ENCODE measurements at regions of chr12 and their contacts with region 1.

Region 1: DNA sequence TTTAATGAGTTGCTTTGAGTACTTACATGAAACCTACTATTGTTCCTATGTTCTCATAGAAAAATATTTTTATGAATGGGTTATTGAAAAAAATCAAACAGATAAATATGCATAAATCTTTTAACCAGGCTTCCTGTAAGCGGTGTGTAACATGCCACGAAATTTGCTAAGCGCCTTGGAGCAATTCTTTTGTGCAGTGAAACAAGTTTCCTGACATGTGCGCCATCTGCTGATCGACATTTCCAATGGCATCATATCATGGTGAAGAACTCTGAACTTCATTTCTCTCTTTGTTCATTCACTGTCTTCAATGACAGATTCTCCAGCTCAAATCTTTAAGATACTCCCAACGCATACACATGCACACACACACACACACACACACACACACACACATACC is 145.6 kb upstream of the NAV3 start:
- DNase-seq: peak; percentile 58
- ATAC-seq: peak; percentile 81
- H3K4me3 Mint-ChIP-seq: no peak overlapping the region
- H3K27ac Mint-ChIP-seq: no peak overlapping the region
- H3K4me1 Mint-ChIP-seq: peaks cover 10% of the 10 kb centered on the region
- H3K27me3 Mint-ChIP-seq: no peaks in the 10 kb centered on the region
- CTCF ChIP-seq: peak; percentile 33; the same call in 1 of the 2 replicates

Region 2: DNA sequence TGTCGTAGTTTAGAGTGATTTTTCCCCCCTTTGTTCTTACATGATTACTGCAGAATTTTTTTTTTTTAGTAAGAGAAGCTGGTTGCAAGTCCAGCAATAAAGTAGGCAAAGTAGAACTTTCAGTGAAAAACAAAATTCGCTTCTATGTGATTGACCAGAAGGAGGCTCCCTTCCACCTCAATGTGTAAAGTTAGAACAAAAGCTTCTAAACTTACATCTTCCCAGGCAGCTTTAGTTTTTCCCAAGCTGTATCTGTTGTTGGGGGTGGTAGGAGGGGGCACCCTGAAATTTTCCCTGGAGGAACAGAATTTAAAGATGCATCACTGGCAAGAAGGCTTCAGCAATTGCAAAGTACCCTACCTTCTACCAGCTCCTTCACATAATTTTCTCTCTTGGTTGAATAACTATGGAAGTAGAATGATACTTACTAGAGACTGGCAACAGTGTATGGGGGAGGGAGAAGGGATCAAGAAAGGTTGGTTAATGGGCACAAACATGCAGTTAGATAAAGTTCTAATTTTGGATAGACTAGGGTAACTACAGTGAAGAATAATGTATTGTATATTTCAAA is 532.4 kb before region 1 on chr12:
- CTCF ChIA-PET with region 1: interaction called, 12 read pairs
- POLR2A ChIA-PET with region 1: no interaction called
- DNase-seq: no peak
- ATAC-seq: peak; percentile 72
- H3K4me3 Mint-ChIP-seq: no peak overlapping the region
- H3K27ac Mint-ChIP-seq: no peak overlapping the region
- H3K4me1 Mint-ChIP-seq: peaks cover 6% of the 10 kb centered on the region
- H3K27me3 Mint-ChIP-seq: no peaks in the 10 kb centered on the region
- CTCF ChIP-seq: peak; percentile 28; the same call in 1 of the 2 replicates

Region 3: DNA sequence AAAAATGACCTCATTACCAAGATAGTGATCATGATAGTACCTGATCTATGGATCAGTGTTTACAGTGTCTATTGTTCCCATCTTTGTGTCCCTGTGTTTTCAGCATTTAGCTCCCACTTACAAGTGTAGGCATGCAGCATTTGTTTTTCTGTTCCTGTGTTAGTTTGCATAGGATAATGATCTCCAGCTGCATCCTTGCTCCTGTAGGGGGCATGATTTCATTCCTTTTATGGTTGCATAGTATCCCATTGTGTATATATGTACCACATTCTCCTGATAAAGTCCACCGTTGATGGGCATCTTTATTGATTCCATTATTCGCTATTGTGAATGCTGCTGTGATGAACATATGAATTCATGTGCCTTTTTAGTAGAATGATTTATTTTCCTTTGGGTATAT is 69.8 kb before region 1 on chr12:
- CTCF ChIA-PET with region 1: interaction called, 21 read pairs
- POLR2A ChIA-PET with region 1: no interaction called
- DNase-seq: peak; percentile 18
- ATAC-seq: peak; percentile 89
- H3K4me3 Mint-ChIP-seq: no peak overlapping the region
- H3K27ac Mint-ChIP-seq: no peak overlapping the region
- H3K4me1 Mint-ChIP-seq: peaks cover 19% of the 10 kb centered on the region
- H3K27me3 Mint-ChIP-seq: no peaks in the 10 kb centered on the region
- CTCF ChIP-seq: 0 out of 2 replicates have a peak, but pooled peaks have one; percentile 13